GM12878 (cell line): ENCODE measurements at regions of chr20 and their contacts with region 1.

Region 1: DNA sequence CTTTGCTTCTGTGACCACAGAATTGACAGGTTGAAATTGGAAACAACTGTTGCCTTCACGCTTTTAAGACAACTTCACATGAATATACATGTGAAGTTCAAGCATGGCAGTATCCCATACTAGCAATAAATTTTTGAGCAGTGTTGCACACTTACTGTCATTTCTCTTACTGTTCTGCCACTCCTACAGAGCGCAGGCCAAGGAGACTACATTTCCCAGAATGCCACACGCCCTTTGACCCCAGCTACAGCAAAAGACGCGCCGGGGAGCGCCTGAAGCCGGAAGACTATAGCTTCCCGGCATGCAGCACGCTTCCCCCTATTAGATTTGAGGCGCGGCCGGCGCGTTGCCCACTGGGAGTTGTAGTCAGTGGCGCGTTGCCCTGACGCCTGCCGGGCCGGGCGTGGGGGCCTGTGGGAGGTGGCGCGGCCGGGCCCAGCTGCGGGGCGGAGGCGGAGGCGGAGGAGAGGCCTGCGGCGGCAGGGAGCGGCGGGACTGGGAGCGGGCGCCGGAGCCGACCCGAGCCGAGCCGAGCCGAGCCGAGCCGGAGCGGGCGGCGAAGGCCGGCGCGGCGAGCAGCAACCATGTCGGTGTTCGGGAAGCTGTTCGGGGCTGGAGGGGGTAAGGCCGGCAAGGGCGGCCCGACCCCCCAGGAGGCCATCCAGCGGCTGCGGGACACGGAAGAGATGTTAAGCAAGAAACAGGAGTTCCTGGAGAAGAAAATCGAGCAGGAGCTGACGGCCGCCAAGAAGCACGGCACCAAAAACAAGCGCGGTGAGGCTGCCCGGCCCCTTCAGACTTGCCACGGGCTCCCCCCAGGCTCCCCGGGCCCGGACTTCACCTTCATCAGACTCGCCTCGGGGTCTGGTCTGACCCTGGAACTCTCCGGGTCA is at the start of gene CHMP4B:
- DNase-seq: peak; percentile 87
- ATAC-seq: peak; percentile 95
- H3K4me3 ChIP-seq: peak within 1 kb of the TSS; percentile 97
- H3K27ac ChIP-seq: peak within 1 kb of the TSS; percentile 90
- H3K4me1 ChIP-seq: peaks cover 4% of the 10 kb centered on the region; the same call in 1 of the 2 replicates
- H3K27me3 ChIP-seq: no peaks in the 10 kb centered on the region
- CTCF ChIP-seq: no peak
- EP300 ChIP-seq: no peak
- POLR2A ChIP-seq: peak; percentile 73
- RAD21 ChIP-seq: no peak
- polyA plus RNA-seq, gene CHMP4B: 4.2 to 12.9 TPM

Region 2: GRCh38 chr20:33686100-33686983 is 124.8 kb before region 1 on chr20 and contains the start of gene E2F1:
- CTCF ChIA-PET with region 1: no interaction called
- POLR2A ChIA-PET with region 1: no interaction called
- RAD21 ChIA-PET with region 1: no interaction called
- SMC1A ChIA-PET with region 1: no interaction called
- in situ Hi-C with region 1: no loop called
- intact Hi-C with region 1: loop called (anchors 1 kb)
- DNase-seq: peak; percentile 61
- ATAC-seq: peak; percentile 95
- H3K4me3 ChIP-seq: peak within 1 kb of the TSS; percentile 79
- H3K27ac ChIP-seq: peak within 1 kb of the TSS; percentile 88
- H3K4me1 ChIP-seq: peaks cover 33% of the 10 kb centered on the region
- H3K27me3 ChIP-seq: no peaks in the 10 kb centered on the region
- CTCF ChIP-seq: peak in 2 of 3 experiments; percentile 21 to 28; a peak in 2 of 6 replicates
- EP300 ChIP-seq: no peak
- POLR2A ChIP-seq: peak; percentile 57; the same call in 1 of the 2 replicates
- RAD21 ChIP-seq: no peak
- polyA plus RNA-seq, gene E2F1: 0.29 to 2.1 TPM

Region 3: GRCh38 chr20:33731693-33732165 is 79.4 kb before region 1 on chr20 and contains the start of gene ZNF341:
- CTCF ChIA-PET with region 1: interaction called, 4 read pairs
- POLR2A ChIA-PET with region 1: interaction called, 9 read pairs
- RAD21 ChIA-PET with region 1: interaction called, 4 read pairs
- SMC1A ChIA-PET with region 1: interaction called, 7 read pairs
- in situ Hi-C with region 1: no loop called
- intact Hi-C with region 1: loop called (anchors 5 kb)
- DNase-seq: peak; percentile 16
- ATAC-seq: peak; percentile 83
- H3K4me3 ChIP-seq: peak within 1 kb of the TSS; percentile 82
- H3K27ac ChIP-seq: peak within 1 kb of the TSS; percentile 77
- H3K4me1 ChIP-seq: peaks cover 7% of the 10 kb centered on the region
- H3K27me3 ChIP-seq: no peaks in the 10 kb centered on the region
- CTCF ChIP-seq: peak; percentile 79 to 89 (median 84)
- EP300 ChIP-seq: no peak
- POLR2A ChIP-seq: peak; percentile 57; the same call in 1 of the 2 replicates
- RAD21 ChIP-seq: peak; percentile 56
- polyA plus RNA-seq, gene ZNF341: 0.18 to 0.46 TPM

Region 4: DNA sequence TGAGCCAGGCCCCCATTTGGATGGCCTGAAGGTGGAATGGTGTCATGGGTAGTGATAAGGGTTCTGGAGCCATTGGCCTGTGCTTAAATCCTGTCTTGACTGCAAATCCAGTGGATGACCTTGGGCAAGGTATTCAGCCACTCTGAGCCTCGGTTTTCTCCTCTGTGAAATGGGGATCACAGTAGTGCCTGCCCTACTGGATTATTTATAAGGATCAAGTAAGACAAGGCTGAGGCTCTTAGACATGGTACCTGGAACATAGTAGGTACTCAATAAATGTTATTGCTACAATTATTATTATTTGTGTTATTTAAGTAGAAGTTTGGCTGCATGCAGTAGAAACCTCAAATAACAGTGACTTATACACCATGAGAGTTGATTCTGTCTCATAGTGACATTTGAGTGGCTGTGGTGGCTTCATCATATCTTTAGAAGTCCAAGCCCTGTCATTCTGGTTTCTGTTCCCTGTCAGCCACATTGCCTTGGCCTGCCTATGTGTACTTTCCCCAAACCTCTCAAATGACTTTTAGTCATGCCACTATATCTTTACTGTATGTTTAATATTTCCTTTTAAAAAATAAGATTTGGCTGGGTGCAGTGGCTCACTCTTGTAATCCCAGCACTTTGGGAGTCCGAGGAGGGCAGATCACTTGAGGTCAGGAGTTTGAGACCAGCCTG is 37.6 kb before region 1 on chr20:
- CTCF ChIA-PET with region 1: no interaction called
- POLR2A ChIA-PET with region 1: interaction called, 4 read pairs
- RAD21 ChIA-PET with region 1: interaction called, 10 read pairs
- SMC1A ChIA-PET with region 1: interaction called, 7 read pairs
- in situ Hi-C with region 1: no loop called
- intact Hi-C with region 1: loop called (anchors 2 kb)
- DNase-seq: peak; percentile 85
- ATAC-seq: peak; percentile 87
- H3K4me3 ChIP-seq: no peak overlapping the region
- H3K27ac ChIP-seq: peak overlapping the region; percentile 83
- H3K4me1 ChIP-seq: peaks cover 33% of the 10 kb centered on the region
- H3K27me3 ChIP-seq: no peaks in the 10 kb centered on the region
- CTCF ChIP-seq: no peak
- EP300 ChIP-seq: peak; percentile 66 to 80; a peak in 2 of 4 replicates
- POLR2A ChIP-seq: no peak
- RAD21 ChIP-seq: no peak

Region 5: DNA sequence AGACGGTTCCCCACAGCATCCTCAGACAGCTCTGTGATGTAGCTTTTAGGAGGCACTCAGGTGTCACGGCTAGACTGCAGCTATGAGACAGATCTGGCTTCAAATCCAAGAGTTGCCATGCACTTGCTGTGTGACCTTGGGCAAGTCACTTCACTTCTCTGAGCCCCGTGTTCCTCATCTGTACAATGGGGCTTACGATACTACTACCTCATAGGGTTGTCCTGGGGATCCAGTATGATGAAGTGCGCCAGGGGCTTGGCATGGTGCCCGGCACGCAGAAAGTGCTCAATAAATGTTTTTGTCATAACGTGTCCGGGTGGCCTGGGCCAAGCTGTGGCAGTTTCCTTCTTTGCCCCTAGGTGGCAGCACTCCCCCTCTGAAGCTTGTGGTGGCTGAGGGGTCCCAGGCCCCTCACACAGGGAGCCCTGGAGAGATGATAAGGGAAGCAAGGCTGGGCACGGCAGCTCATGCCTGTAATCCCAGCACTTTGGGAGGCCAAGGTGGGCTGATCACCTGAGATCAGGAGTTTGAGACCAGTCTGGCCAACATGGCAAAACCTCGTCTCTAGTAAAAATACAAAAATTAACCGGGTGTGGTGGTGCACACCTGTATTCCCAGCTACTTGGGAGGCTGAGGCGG is 19.1 kb before region 1 on chr20:
- CTCF ChIA-PET with region 1: interaction called, 19 read pairs
- POLR2A ChIA-PET with region 1: interaction called, 5 read pairs
- RAD21 ChIA-PET with region 1: interaction called, 3 read pairs
- SMC1A ChIA-PET with region 1: interaction called, 5 read pairs
- in situ Hi-C with region 1: no loop called
- intact Hi-C with region 1: no loop called
- DNase-seq: no peak
- ATAC-seq: peak; percentile 82
- H3K4me3 ChIP-seq: no peak overlapping the region
- H3K27ac ChIP-seq: no peak overlapping the region
- H3K4me1 ChIP-seq: no peaks in the 10 kb centered on the region
- H3K27me3 ChIP-seq: no peaks in the 10 kb centered on the region
- CTCF ChIP-seq: peak; percentile 56 to 78 (median 69)
- EP300 ChIP-seq: no peak
- POLR2A ChIP-seq: no peak
- RAD21 ChIP-seq: peak; percentile 65

Region 6: DNA sequence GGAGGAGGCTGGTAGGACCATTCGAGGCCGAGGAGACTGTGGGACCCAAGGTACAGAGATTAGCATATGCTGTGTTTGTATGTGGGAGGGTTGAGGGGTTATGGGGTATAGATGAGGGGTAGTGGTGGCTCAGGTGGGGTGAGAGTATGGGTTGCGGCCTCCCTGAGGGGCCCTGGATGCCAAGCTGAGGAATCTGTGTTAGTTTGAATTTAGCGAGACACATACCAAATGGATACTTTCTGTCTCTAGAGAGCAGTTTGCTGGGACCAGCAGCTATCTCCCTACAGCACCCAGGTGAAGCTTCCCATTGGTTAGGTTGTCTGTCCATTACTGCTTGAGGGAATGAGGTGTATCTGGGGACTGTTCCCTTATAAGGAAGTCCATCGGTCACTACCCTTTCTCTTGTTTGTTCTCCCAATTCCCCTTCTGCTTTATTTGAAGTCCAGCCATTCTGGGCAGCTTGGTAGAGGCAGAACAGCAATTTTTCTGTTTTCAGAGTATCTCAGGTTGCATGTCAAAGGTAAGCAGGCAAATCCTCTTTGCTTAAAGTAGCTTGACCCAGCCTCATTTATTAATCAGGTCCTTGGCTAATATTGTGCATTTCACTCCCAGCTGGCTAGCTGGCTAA is 15.3 kb after region 1 on chr20:
- CTCF ChIA-PET with region 1: interaction called, 4 read pairs
- POLR2A ChIA-PET with region 1: interaction called, 6 read pairs
- RAD21 ChIA-PET with region 1: interaction called, 6 read pairs
- SMC1A ChIA-PET with region 1: interaction called, 26 read pairs
- in situ Hi-C with region 1: no loop called
- intact Hi-C with region 1: no loop called
- DNase-seq: no peak
- ATAC-seq: no peak; the same call in 2 of the 3 replicates
- H3K4me3 ChIP-seq: no peak overlapping the region
- H3K27ac ChIP-seq: no peak overlapping the region
- H3K4me1 ChIP-seq: peaks cover 9% of the 10 kb centered on the region
- H3K27me3 ChIP-seq: no peaks in the 10 kb centered on the region
- CTCF ChIP-seq: no peak
- EP300 ChIP-seq: no peak
- POLR2A ChIP-seq: no peak
- RAD21 ChIP-seq: no peak